ENCODE measurements at regions of chr9 and their contacts with region 1.

Region 1: DNA sequence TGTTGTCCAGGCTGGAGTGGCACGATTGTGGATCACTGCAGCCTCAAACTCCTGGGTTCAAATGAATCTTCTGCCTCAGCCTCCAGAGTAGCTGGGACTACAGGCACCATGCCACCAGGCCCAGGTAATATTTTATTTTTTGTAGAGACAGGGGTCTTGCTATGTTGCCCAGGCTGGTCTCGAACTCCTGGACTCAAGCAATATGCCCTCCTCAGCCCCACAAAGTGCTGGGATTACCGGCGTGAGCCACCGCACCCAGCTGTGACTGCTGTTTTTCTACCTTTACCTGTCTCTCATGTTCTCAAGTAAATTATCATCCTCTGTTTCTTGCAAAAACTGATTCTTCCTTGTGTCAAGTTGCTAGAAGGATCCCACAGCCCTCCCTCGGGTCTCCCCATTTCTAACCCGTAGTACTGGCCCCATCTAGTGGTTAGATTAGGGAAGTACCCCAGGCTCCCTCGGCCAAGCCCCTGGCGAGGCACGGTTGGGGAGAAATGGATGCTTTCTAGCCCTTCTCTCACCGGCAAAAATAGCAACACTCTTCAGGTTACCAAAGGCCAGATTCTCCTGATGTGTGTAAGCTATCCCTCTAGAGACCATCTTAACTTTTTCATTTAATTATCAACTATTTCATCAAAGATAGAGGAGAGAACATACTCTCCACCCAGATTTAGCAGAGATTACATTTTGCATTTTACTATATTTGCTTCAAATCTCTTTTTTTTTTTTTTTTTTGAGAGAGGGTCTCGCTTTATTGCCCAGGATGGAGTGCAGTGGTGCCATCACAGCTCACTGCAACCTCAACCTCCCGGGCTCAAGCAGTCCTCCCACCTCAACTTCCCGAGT is 19.2 kb upstream of the TOR1B start:
- DNase-seq: peak; percentile 86
- ATAC-seq: peak; percentile 93

Region 2: DNA sequence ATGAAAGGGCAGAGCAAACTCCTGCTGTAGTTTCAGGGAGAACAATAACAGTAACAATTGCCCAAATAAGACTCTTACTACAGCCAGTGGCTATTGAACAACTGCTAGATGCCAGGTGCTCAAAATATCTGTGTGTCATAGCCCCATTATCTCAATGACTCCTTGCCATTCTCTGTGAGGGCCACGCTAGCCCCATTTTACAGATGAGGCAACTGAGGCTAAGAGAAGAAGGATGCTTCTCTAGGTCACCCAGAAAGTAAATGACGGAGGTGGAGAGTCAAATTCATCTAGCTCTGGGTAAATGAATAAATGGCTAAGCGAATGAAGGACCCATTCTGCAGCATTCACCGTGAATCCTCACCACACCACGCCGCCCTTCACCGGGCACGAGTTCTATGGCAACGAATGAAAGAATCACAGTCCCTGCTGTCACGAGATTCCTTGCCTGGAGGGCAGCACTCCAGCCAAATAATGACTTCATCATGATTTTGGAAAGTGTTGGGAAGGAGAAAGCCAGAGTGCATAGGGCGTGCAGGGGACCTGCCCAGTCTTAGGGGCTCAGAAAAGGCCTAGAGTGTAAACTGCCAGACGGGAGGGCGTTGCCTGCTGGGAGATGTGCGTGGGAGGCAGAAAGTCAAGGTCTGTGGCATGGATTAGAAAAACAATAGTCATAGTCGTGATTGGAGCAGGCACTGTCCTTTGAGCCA is 310.1 kb before region 1 on chr9:
- intact Hi-C with region 1: no loop called
- DNase-seq: no peak
- ATAC-seq: peak; percentile 83

Region 3: GRCh38 chr9:129641746-129642513 is 141.8 kb before region 1 on chr9 and contains the start of gene ASB6:
- intact Hi-C with region 1: loop called (anchors 5 kb)
- DNase-seq: peak; percentile 99
- ATAC-seq: peak; percentile 96
- total RNA-seq, gene ASB6: 18.6 TPM

Region 4: GRCh38 chr9:129740174-129740573 is 43.6 kb before region 1 on chr9:
- intact Hi-C with region 1: loop called (anchors 5 kb)
- DNase-seq: no peak
- ATAC-seq: no peak

Measured in sciatic nerve (tissue), 2 donors.